ENCODE measurements at regions of chr2 and their contacts with region 1.

Region 1: DNA sequence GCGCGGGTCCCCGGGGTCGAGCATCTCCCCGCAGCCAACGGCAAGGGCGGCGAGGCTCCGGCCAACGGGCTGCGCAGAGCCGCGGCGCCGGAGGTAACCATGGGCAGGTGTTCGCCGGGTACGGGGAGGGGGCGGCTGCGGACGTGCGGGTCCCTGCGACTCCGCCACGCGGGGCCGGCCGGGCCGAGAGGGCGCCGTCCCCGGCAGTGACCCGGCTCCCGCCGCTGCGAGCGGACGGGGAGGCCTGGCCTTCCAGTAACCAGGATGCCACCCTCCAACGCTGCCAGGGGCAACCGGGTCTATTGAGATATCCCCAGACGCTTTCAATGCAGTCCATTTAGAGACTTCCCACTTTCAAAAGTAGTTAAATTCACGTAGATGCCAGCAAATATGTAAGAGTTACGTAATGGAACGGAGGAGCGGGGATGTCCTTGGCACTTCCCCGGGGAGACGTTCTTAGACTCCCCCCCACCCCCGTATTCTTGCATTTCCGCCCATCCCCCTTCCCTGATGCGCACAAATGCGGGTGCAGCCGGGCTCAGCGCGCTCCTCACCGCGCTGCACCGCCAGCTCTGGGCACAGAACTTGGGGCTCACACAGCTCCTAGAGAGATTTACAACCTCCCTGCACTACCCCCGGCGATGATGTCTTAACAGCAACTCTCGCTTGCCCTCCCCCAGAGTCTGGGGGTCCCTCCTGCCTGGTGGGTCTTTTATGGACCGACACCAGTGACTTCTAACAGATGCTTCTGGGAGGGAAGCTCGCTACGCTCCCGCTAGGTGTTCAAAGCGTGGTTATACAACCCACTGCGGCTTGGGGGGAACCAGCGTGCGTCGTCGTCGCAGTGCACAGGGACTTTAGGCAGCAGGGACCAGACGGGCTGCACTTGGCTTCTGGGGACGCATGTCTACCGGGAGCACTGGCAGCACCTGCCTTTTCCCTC is 657 bp downstream of the SGPP2 start:
- DNase-seq: no peak
- ATAC-seq: peak; percentile 41
- H3K4me3 ChIP-seq: peak overlapping the region; percentile 73
- H3K27ac ChIP-seq: peak overlapping the region; percentile 79
- H3K4me1 ChIP-seq: peaks cover 29% of the 10 kb centered on the region
- H3K27me3 ChIP-seq: no peaks in the 10 kb centered on the region
- CTCF ChIP-seq: no peak
- EP300 ChIP-seq: peak; percentile 34 to 35; a peak in 1 of 4 replicates
- POLR2A ChIP-seq: 0 out of 2 replicates have a peak, but pooled peaks have one; percentile 24
- RAD21 ChIP-seq: no peak

Region 2: DNA sequence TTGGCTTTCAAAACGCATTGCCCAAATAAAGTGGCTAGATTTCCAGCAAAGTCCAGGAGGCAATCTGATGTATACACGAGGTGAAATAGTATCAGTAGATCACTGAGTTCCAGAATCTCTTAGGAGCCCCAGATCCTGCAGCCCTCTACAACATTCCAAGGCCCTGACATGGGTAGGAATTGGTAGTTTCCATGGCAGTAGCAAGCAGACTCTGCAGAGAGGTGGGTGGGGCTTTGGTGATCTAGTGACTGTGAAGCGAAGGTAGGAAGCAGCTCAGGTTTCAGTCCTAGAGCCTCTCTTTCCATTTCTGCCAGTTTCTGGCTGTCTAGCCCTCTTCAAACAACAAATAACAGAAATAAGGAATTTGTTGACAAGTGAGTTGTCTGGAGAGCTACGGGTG is 14.5 kb before region 1 on chr2:
- CTCF ChIA-PET with region 1: interaction called, 8 read pairs
- POLR2A ChIA-PET with region 1: no interaction called
- RAD21 ChIA-PET with region 1: interaction called, 3 read pairs
- SMC1A ChIA-PET with region 1: interaction called, 10 read pairs
- in situ Hi-C with region 1: no loop called
- intact Hi-C with region 1: no loop called
- DNase-seq: no peak
- ATAC-seq: no peak
- H3K4me3 ChIP-seq: no peak overlapping the region
- H3K27ac ChIP-seq: no peak overlapping the region
- H3K4me1 ChIP-seq: no peaks in the 10 kb centered on the region
- H3K27me3 ChIP-seq: no peaks in the 10 kb centered on the region
- CTCF ChIP-seq: no peak
- EP300 ChIP-seq: no peak
- POLR2A ChIP-seq: no peak
- RAD21 ChIP-seq: no peak

Region 3: GRCh38 chr2:222451224-222451674 is 26.2 kb after region 1 on chr2:
- CTCF ChIA-PET with region 1: interaction called, 9 read pairs
- POLR2A ChIA-PET with region 1: interaction called, 5 read pairs
- RAD21 ChIA-PET with region 1: interaction called, 15 read pairs
- SMC1A ChIA-PET with region 1: interaction called, 47 read pairs
- in situ Hi-C with region 1: no loop called
- intact Hi-C with region 1: loop called (anchors 1 kb)
- DNase-seq: peak; percentile 77
- ATAC-seq: peak; percentile 100
- H3K4me3 ChIP-seq: no peak overlapping the region
- H3K27ac ChIP-seq: no peak overlapping the region
- H3K4me1 ChIP-seq: peaks cover 9% of the 10 kb centered on the region
- H3K27me3 ChIP-seq: no peaks in the 10 kb centered on the region
- CTCF ChIP-seq: peak; percentile 23 to 57 (median 42); a peak in 5 of 6 replicates
- EP300 ChIP-seq: peak; percentile 62 to 66; a peak in 2 of 4 replicates
- POLR2A ChIP-seq: no peak
- RAD21 ChIP-seq: peak; percentile 54

Region 4: DNA sequence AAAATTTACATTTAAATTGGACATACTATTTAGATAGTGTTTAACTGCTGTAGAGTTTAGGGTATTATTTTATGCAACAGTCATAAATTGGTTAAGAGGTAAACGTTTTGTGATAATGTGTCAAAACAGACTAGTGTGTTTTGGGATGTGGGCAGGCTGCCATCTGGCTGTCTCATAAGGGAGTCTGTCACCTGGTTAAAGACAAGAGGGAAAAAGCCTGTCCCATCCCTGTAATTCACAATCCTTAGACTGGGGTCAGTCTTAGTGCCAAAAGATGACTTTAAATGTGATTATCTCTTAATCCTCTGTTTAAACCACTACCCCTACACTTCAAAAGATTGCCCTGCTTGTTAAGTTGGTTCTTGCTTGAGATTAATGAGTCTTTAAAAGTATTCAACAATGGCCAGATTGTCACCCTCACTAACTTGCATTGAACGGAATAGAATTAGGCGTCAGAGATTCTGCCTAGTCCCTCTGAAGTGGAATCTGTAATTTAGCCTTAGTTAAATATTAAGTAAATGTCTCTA is 58.6 kb after region 1 on chr2:
- CTCF ChIA-PET with region 1: interaction called, 3 read pairs
- POLR2A ChIA-PET with region 1: no interaction called
- RAD21 ChIA-PET with region 1: interaction called, 4 read pairs
- SMC1A ChIA-PET with region 1: interaction called, 16 read pairs
- in situ Hi-C with region 1: no loop called
- intact Hi-C with region 1: no loop called
- DNase-seq: no peak
- ATAC-seq: peak; percentile 50; the same call in 2 of the 3 replicates
- H3K4me3 ChIP-seq: no peak overlapping the region
- H3K27ac ChIP-seq: no peak overlapping the region
- H3K4me1 ChIP-seq: no peaks in the 10 kb centered on the region
- H3K27me3 ChIP-seq: no peaks in the 10 kb centered on the region
- CTCF ChIP-seq: peak in 2 of 3 experiments; percentile 25 to 63; a peak in 3 of 6 replicates
- EP300 ChIP-seq: no peak
- POLR2A ChIP-seq: no peak
- RAD21 ChIP-seq: peak; percentile 38; the same call in 1 of the 2 replicates

Region 5: GRCh38 chr2:222494104-222494739 is 69.2 kb after region 1 on chr2:
- CTCF ChIA-PET with region 1: interaction called, 4 read pairs
- POLR2A ChIA-PET with region 1: interaction called, 10 read pairs
- RAD21 ChIA-PET with region 1: no interaction called
- SMC1A ChIA-PET with region 1: interaction called, 3 read pairs
- in situ Hi-C with region 1: no loop called
- intact Hi-C with region 1: no loop called
- DNase-seq: no peak
- ATAC-seq: no peak
- H3K4me3 ChIP-seq: no peak overlapping the region
- H3K27ac ChIP-seq: no peak overlapping the region
- H3K4me1 ChIP-seq: no peaks in the 10 kb centered on the region
- H3K27me3 ChIP-seq: no peaks in the 10 kb centered on the region
- CTCF ChIP-seq: no peak
- EP300 ChIP-seq: no peak
- POLR2A ChIP-seq: no peak
- RAD21 ChIP-seq: no peak

Region 6: GRCh38 chr2:222561817-222562645 is 137.0 kb after region 1 on chr2:
- CTCF ChIA-PET with region 1: interaction called, 12 read pairs
- POLR2A ChIA-PET with region 1: interaction called, 3 read pairs
- RAD21 ChIA-PET with region 1: interaction called, 8 read pairs
- SMC1A ChIA-PET with region 1: interaction called, 8 read pairs
- in situ Hi-C with region 1: no loop called
- intact Hi-C with region 1: no loop called
- DNase-seq: peak; percentile 13
- ATAC-seq: peak; percentile 90
- H3K4me3 ChIP-seq: no peak overlapping the region
- H3K27ac ChIP-seq: no peak overlapping the region
- H3K4me1 ChIP-seq: no peaks in the 10 kb centered on the region
- H3K27me3 ChIP-seq: no peaks in the 10 kb centered on the region
- CTCF ChIP-seq: peak; percentile 77 to 80 (median 79)
- EP300 ChIP-seq: no peak
- POLR2A ChIP-seq: no peak
- RAD21 ChIP-seq: peak; percentile 91

Region 7: GRCh38 chr2:222655787-222656525 is 231.0 kb after region 1 on chr2 and contains the start of gene FARSB:
- CTCF ChIA-PET with region 1: no interaction called
- POLR2A ChIA-PET with region 1: no interaction called
- RAD21 ChIA-PET with region 1: no interaction called
- SMC1A ChIA-PET with region 1: no interaction called
- in situ Hi-C with region 1: no loop called
- intact Hi-C with region 1: loop called (anchors 5 kb)
- DNase-seq: peak; percentile 94
- ATAC-seq: peak; percentile 90
- H3K4me3 ChIP-seq: peak within 1 kb of the TSS; percentile 95
- H3K27ac ChIP-seq: peak within 1 kb of the TSS; percentile 98
- H3K4me1 ChIP-seq: peaks cover 20% of the 10 kb centered on the region
- H3K27me3 ChIP-seq: no peaks in the 10 kb centered on the region
- CTCF ChIP-seq: no peak
- EP300 ChIP-seq: no peak
- POLR2A ChIP-seq: peak; percentile 97
- RAD21 ChIP-seq: no peak
- polyA plus RNA-seq, gene FARSB: 107 to 127 TPM